Activated CD4-positive, alpha-beta T cell treated with anti-CD3 and anti-CD28 coated beads for 36 hours (primary cell): ENCODE measurements at regions of chr17 and their contacts with region 1.

Region 1: GRCh38 chr17:2253768-2254406 is 49.7 kb downstream of the SMG6 start:
- DNase-seq: peak; percentile 59
- ATAC-seq: peak; percentile 94
- H3K4me3 Mint-ChIP-seq: peak overlapping the region; percentile 22
- H3K27ac Mint-ChIP-seq: peak overlapping the region; percentile 84
- H3K4me1 Mint-ChIP-seq: peaks cover 69% of the 10 kb centered on the region
- H3K27me3 Mint-ChIP-seq: no peaks in the 10 kb centered on the region

Region 2: GRCh38 chr17:2192367-2193057 is 61.4 kb before region 1 on chr17:
- CTCF ChIA-PET with region 1: no interaction called
- POLR2A ChIA-PET with region 1: interaction called, 10 read pairs
- intact Hi-C with region 1: loop called in 1 of 2 experiments (anchors 10 kb)
- DNase-seq: peak; percentile 69
- ATAC-seq: peak; percentile 57
- H3K4me3 Mint-ChIP-seq: no peak overlapping the region
- H3K27ac Mint-ChIP-seq: peak overlapping the region; percentile 61
- H3K4me1 Mint-ChIP-seq: peaks cover 47% of the 10 kb centered on the region
- H3K27me3 Mint-ChIP-seq: no peaks in the 10 kb centered on the region

Region 3: GRCh38 chr17:2222901-2223616 is 30.8 kb before region 1 on chr17:
- CTCF ChIA-PET with region 1: interaction called, 5 read pairs
- POLR2A ChIA-PET with region 1: no interaction called
- intact Hi-C with region 1: loop called in 1 of 2 experiments (anchors 2 kb)
- DNase-seq: peak; percentile 73
- ATAC-seq: peak; percentile 73
- H3K4me3 Mint-ChIP-seq: peak overlapping the region; percentile 25
- H3K27ac Mint-ChIP-seq: peak overlapping the region; percentile 57
- H3K4me1 Mint-ChIP-seq: peaks cover 38% of the 10 kb centered on the region
- H3K27me3 Mint-ChIP-seq: no peaks in the 10 kb centered on the region

Region 4: GRCh38 chr17:2266045-2266864 is 12.4 kb after region 1 on chr17:
- CTCF ChIA-PET with region 1: interaction called, 30 read pairs
- POLR2A ChIA-PET with region 1: interaction called, 32 read pairs
- intact Hi-C with region 1: loop called (anchors 1 kb)
- DNase-seq: peak; percentile 93
- ATAC-seq: peak; percentile 76
- H3K4me3 Mint-ChIP-seq: peak overlapping the region; percentile 72
- H3K27ac Mint-ChIP-seq: peak overlapping the region; percentile 98
- H3K4me1 Mint-ChIP-seq: peaks cover 86% of the 10 kb centered on the region
- H3K27me3 Mint-ChIP-seq: no peaks in the 10 kb centered on the region

Region 5: GRCh38 chr17:2282297-2282873 is 28.5 kb after region 1 on chr17:
- CTCF ChIA-PET with region 1: interaction called, 13 read pairs
- POLR2A ChIA-PET with region 1: interaction called, 3 read pairs
- intact Hi-C with region 1: no loop called
- DNase-seq: no peak
- ATAC-seq: peak; percentile 80
- H3K4me3 Mint-ChIP-seq: no peak overlapping the region
- H3K27ac Mint-ChIP-seq: peak overlapping the region; percentile 58
- H3K4me1 Mint-ChIP-seq: peaks cover 31% of the 10 kb centered on the region
- H3K27me3 Mint-ChIP-seq: no peaks in the 10 kb centered on the region